RWPE1 (cell line): ENCODE measurements at regions of chr17 and their contacts with region 1.

Region 1: GRCh38 chr17:81419328-81419885 is 24.1 kb downstream of the BAHCC1 start:
- DNase-seq: peak; percentile 64
- H3K27ac ChIP-seq: peak overlapping the region; percentile 95
- CTCF ChIP-seq: no peak

Region 2: DNA sequence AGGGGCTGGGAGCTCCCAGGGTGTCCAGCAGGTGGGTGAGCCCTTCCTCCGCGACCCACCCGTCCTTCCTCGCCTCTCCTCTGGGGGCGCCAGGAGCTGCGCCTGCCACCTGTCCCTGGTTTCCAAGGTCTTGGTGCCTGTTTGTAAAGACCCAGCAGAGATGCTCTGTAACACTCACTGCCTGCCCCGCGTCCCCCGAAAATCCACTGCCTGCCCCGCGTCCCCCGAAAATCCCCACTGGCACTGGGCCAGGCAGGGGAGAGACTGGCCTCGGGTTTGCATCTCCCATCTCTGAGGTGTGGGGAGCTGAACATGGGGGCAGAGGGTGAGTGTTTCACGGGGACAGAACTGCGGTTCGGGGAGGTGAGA is 21.5 kb after region 1 on chr17:
- CTCF ChIA-PET with region 1: interaction called, 15 read pairs
- POLR2A ChIA-PET with region 1: no interaction called
- DNase-seq: no peak
- H3K27ac ChIP-seq: no peak overlapping the region
- CTCF ChIP-seq: peak; percentile 68